Naive thymus-derived CD4-positive, alpha-beta T cell (primary cell): ENCODE measurements at regions of chr2 and their contacts with region 1.

Region 1: DNA sequence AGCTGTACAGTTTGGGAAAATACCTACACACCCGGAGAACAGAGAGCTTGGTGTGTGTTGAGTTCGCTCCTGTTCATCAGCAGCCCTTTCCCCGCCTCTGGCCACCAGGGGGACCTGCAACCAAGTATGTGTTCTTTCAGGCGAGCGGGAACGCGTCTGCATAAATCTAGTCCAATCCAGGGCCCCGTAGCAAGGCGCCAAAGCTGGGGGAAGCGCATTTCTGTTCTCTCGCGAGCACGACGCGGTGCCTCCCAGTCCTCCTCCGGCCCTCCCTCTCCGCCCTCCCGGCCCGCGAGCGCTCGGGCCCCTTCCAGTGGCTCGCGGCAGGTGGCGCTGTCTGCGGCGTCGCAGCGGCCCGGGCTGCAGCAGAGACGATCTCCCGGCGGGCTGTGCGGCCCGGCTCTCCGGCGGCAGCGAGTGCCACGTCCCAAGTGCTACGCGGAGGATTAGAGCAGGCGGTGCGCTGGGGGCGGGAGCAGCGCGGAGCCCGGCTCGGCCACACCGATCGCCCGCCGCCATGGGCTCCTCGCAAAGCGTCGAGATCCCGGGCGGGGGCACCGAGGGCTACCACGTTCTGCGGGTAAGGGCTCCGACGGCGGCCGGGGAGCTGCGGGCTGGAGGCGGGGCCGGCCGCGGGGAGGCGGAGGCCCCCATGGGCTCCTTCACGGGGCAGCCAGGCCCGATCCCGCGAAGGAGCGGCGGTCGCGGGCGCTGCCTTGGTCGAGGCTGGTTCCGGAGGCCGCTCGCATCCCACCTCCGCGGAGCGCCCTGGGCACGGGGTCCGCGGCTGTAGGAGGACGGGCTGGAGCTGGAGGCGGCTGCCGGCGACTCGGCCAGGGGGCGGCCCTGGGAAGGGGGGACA is at the start of gene GORASP2:
- DNase-seq: peak; percentile 97 to 99 (median 98)
- ATAC-seq: peak; percentile 94
- H3K4me3 ChIP-seq: peak within 1 kb of the TSS; percentile 88
- H3K4me3 Mint-ChIP-seq: peak within 1 kb of the TSS; percentile 89 to 97 (median 95)
- H3K27ac ChIP-seq: peak within 1 kb of the TSS; percentile 87
- H3K27ac Mint-ChIP-seq: peak within 1 kb of the TSS; percentile 93 to 96 (median 95)
- H3K4me1 ChIP-seq: peaks cover 18 to 32% of the 10 kb centered on the region in 2 donors
- H3K4me1 Mint-ChIP-seq: peaks cover 24 to 56% (median 48%) of the 10 kb centered on the region in 7 donors
- H3K27me3 ChIP-seq: no peaks in the 10 kb centered on the region
- H3K27me3 Mint-ChIP-seq: no peaks in the 10 kb centered on the region
- total RNA-seq, gene GORASP2: 65.2 to 79.2 (median 73.2) TPM

Region 2: GRCh38 chr2:169479257-169480078 is 1449.6 kb before region 1 on chr2 and contains the start of gene BBS5:
- CTCF ChIA-PET with region 1: no interaction called
- POLR2A ChIA-PET with region 1: no interaction called
- intact Hi-C with region 1: loop called (anchors 2 to 10 kb)
- DNase-seq: peak; percentile 55 to 78 (median 74)
- ATAC-seq: peak; percentile 93
- H3K4me3 ChIP-seq: peak within 1 kb of the TSS; percentile 87
- H3K4me3 Mint-ChIP-seq: peak within 1 kb of the TSS; percentile 89 to 96 (median 92)
- H3K27ac ChIP-seq: peak within 1 kb of the TSS; percentile 49
- H3K27ac Mint-ChIP-seq: peak within 1 kb of the TSS; percentile 37 to 86 (median 69)
- H3K4me1 ChIP-seq: peaks cover 0 to 3% of the 10 kb centered on the region in 2 donors
- H3K4me1 Mint-ChIP-seq: peaks cover 12 to 30% (median 22%) of the 10 kb centered on the region in 7 donors
- H3K27me3 ChIP-seq: no peaks in the 10 kb centered on the region
- H3K27me3 Mint-ChIP-seq: no peaks in the 10 kb centered on the region
- total RNA-seq, gene BBS5: 2.0 to 3.8 (median 2.6) TPM

Region 3: DNA sequence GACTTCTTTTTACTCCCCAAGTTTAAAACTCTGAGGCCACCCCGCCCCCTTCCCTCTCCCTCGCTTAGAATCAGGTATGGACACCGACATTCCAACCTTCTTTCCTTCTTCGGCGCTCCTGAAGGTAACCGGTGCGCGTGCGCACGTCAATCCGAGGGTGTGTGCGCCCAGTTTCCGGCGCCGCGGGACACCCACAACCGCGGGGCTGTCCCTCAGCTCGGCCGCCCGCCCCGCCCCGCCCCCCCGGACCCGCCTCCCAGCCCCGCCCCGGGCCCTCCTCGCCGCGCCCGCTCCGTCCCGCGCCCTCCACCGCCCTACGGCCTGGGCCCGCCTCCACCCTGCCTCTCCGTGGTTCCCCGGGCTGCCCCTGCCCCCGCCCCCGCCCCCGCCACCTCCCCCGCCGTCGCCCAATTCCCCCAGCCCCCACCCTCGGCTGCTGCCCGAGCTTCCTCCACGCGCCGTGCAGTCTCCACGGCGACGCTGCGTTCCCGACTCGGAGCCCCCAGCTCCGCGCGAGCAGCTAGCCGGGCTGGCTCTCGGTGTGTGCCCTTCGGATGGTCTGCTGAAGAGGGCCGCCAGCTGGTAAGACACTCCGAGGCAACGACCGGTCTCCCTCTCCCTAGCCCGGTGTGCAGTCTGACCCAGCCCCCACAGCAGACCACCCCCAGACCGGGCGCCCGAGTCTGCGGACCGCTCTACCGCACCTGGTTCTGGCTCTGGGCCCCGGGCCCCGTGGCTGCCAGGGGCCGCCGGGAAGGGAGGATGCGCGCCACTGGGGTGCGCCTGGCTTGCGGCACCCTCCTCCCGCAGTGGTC is 158.2 kb before region 1 on chr2:
- CTCF ChIA-PET with region 1: no interaction called
- POLR2A ChIA-PET with region 1: no interaction called
- intact Hi-C with region 1: loop called (anchors 2 kb)
- DNase-seq: peak; percentile 31 to 77 (median 50)
- ATAC-seq: peak; percentile 91
- H3K4me3 ChIP-seq: peak overlapping the region; percentile 74
- H3K4me3 Mint-ChIP-seq: peak overlapping the region; percentile 77 to 91 (median 84)
- H3K27ac ChIP-seq: peak overlapping the region; percentile 51
- H3K27ac Mint-ChIP-seq: peak overlapping the region in 6 of 9 donors; percentile 27 to 80 (median 55)
- H3K4me1 ChIP-seq: peaks cover 4 to 8% of the 10 kb centered on the region in 2 donors
- H3K4me1 Mint-ChIP-seq: peaks cover 6 to 34% (median 18%) of the 10 kb centered on the region in 7 donors
- H3K27me3 ChIP-seq: no peaks in the 10 kb centered on the region
- H3K27me3 Mint-ChIP-seq: peaks cover 0 to 52% (median 10%) of the 10 kb centered on the region in 5 donors

Region 4: DNA sequence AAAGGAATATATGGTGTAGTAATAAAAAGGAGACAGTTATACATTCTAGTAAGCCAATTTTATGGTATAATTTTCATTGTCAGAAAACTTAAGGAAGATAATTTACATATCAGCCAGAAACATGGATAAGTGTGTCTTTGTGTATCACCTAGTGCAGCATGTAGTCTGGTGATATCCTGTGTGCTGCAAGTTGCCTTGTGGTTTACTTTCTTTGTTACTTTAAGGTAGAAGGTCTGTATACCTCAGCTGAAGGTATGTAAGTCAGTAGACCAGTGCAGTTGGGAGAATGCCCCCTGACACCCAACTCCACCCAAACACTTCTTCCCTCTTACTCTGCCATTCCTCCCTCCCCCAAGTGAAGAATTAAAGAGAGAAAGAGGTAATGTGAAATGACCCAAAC is 11.0 kb after region 1 on chr2:
- CTCF ChIA-PET with region 1: interaction called, 9 read pairs
- POLR2A ChIA-PET with region 1: interaction called, 5 read pairs
- intact Hi-C with region 1: loop called in 1 of 2 experiments (anchors 1 kb)
- DNase-seq: no peak
- ATAC-seq: peak; percentile 37
- H3K4me3 ChIP-seq: no peak overlapping the region
- H3K4me3 Mint-ChIP-seq: peak overlapping the region in 3 of 10 donors; percentile 9 to 60 (median 17)
- H3K27ac ChIP-seq: no peak overlapping the region
- H3K27ac Mint-ChIP-seq: peak overlapping the region in 3 of 9 donors; percentile 21 to 63 (median 48)
- H3K4me1 ChIP-seq: peaks cover 6 to 27% of the 10 kb centered on the region in 2 donors
- H3K4me1 Mint-ChIP-seq: peaks cover 41 to 86% (median 83%) of the 10 kb centered on the region in 7 donors
- H3K27me3 ChIP-seq: no peaks in the 10 kb centered on the region
- H3K27me3 Mint-ChIP-seq: no peaks in the 10 kb centered on the region

Region 5: GRCh38 chr2:171416009-171416926 is 487.2 kb after region 1 on chr2:
- CTCF ChIA-PET with region 1: interaction called, 33 read pairs
- POLR2A ChIA-PET with region 1: interaction called, 3 read pairs
- intact Hi-C with region 1: loop called (anchors 1 to 5 kb)
- DNase-seq: peak; percentile 29 to 82 (median 75)
- ATAC-seq: peak; percentile 99
- H3K4me3 ChIP-seq: no peak overlapping the region
- H3K4me3 Mint-ChIP-seq: no peak overlapping the region
- H3K27ac ChIP-seq: no peak overlapping the region
- H3K27ac Mint-ChIP-seq: peak overlapping the region; percentile 4 to 74 (median 55)
- H3K4me1 ChIP-seq: no peaks in the 10 kb centered on the region
- H3K4me1 Mint-ChIP-seq: peaks cover 6 to 22% (median 7%) of the 10 kb centered on the region in 7 donors
- H3K27me3 ChIP-seq: no peaks in the 10 kb centered on the region
- H3K27me3 Mint-ChIP-seq: no peaks in the 10 kb centered on the region

Region 6: DNA sequence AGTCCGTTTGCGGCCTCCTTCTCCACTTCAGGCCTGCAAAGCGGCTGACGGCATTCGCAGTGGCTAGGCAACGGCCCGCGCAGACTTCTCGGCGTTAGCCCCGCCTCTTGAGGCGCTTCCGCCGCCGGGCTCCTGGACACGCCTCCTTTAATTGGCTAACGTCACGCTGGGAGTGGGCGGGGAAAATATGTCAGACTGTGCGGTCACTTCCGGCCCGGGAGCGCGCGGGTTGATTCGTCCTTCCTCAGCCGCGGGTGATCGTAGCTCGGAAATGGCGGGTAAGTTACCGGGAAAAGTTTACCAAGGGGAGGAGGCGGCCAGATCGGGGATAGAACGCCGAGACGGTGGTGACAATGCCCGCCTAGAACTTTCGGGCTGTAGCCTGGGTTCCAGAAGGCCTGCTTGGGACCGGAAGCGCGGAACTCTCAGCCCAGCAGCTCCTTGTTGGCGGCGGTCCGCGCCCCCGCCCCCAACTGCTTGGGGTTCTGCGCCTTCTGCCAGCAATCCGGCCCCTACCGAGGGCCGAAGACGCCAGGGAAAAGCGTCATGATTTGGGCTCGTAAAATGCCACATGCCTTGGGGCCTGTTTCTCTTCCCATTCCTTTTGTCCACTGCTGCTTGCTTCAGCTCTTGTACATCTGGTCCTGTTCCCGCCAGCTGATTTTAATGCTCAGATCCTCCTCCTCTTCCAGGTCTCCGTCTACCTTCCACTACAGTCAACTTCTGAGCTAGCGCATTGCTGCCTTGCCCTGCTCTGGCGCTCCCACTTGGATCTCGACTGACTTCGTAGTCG is 993.4 kb after region 1 on chr2 and contains the start of gene HAT1:
- CTCF ChIA-PET with region 1: no interaction called
- POLR2A ChIA-PET with region 1: interaction called, 3 read pairs
- intact Hi-C with region 1: loop called (anchors 1 to 2 kb)
- DNase-seq: peak; percentile 92 to 98 (median 97)
- ATAC-seq: peak; percentile 99
- H3K4me3 ChIP-seq: peak within 1 kb of the TSS; percentile 75
- H3K4me3 Mint-ChIP-seq: peak within 1 kb of the TSS; percentile 90 to 100 (median 99)
- H3K27ac ChIP-seq: peak within 1 kb of the TSS; percentile 93
- H3K27ac Mint-ChIP-seq: peak within 1 kb of the TSS; percentile 96 to 100 (median 99)
- H3K4me1 ChIP-seq: peaks cover 13 to 17% of the 10 kb centered on the region in 2 donors
- H3K4me1 Mint-ChIP-seq: peaks cover 20 to 50% (median 42%) of the 10 kb centered on the region in 7 donors
- H3K27me3 ChIP-seq: no peaks in the 10 kb centered on the region
- H3K27me3 Mint-ChIP-seq: no peaks in the 10 kb centered on the region
- total RNA-seq, gene HAT1: 22.1 to 55.4 (median 26.4) TPM